Motor neuron (in vitro differentiated cells): ENCODE measurements at regions of chr15 and their contacts with region 1.

Region 1: GRCh38 chr15:39801641-39802309 is 19.1 kb upstream of the FSIP1 start:
- ATAC-seq: peak in 3 of 8 experiments; percentile 29 to 68 (median 61)
- H3K4me3 ChIP-seq: no peak overlapping the region
- H3K27ac ChIP-seq: no peak overlapping the region
- H3K4me1 ChIP-seq: peaks cover 11% of the 10 kb centered on the region in 2 donors

Region 2: DNA sequence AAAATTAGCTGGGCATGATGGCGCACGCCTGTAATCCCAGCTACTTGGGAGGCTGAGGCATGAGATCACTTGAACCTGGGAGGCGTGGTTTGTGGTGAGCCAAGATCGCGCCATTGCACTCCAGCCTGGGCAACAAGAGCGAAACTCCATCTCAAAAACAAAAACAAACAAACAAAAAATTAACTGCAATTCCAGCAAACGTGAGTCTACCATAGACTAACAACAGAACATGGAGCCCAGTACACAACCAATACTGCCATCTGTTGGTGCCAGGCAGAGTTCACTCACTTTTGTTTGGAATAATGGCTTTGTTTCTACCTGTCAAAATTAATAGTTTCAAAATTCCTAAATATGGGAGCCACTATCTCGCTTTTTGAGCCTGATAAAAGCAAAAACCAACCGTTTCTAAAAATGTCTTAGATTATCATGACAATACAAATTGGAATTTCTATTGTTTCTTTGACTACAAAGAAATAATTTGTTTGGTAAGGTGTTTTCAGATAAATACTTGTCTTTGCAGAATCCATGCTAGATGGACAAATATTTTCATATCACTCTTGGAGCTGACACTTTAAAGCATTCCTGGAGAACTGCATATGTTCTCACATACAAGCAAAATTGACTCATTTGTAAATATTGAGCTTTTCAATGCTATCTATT is 73.2 kb after region 1 on chr15:
- in situ Hi-C with region 1: loop called in 1 of 9 experiments (anchors 5 kb)
- ATAC-seq: peak in 5 of 8 experiments; percentile 37 to 70 (median 50)
- H3K4me3 ChIP-seq: no peak overlapping the region
- H3K27ac ChIP-seq: no peak overlapping the region
- H3K4me1 ChIP-seq: peaks cover 4 to 7% of the 10 kb centered on the region in 2 donors

Region 3: GRCh38 chr15:39920510-39921273 is 118.9 kb after region 1 on chr15:
- in situ Hi-C with region 1: loop called in 2 of 9 experiments (anchors 25 kb)
- ATAC-seq: peak; percentile 67 to 83 (median 80)
- H3K4me3 ChIP-seq: peak overlapping the region; percentile 37 to 45 (median 40)
- H3K27ac ChIP-seq: peak overlapping the region; percentile 37 to 38
- H3K4me1 ChIP-seq: peaks cover 0 to 3% of the 10 kb centered on the region in 2 donors

Region 4: GRCh38 chr15:39934397-39935071 is 132.8 kb after region 1 on chr15:
- in situ Hi-C with region 1: no loop called
- ATAC-seq: peak; percentile 3 to 18 (median 10)
- H3K4me3 ChIP-seq: peak overlapping the region; percentile 47 to 68 (median 57)
- H3K27ac ChIP-seq: peak overlapping the region; percentile 44 to 58
- H3K4me1 ChIP-seq: peaks cover 4 to 9% of the 10 kb centered on the region in 2 donors

Region 5: GRCh38 chr15:40010686-40011085 is 208.9 kb after region 1 on chr15:
- in situ Hi-C with region 1: loop called in 1 of 9 experiments (anchors 25 kb)
- ATAC-seq: peak in 1 of 8 experiments; percentile 61
- H3K4me3 ChIP-seq: no peak overlapping the region
- H3K27ac ChIP-seq: no peak overlapping the region
- H3K4me1 ChIP-seq: no peaks in the 10 kb centered on the region